CD4-positive, alpha-beta T cell (primary cell): ENCODE measurements at regions of chr5 and their contacts with region 1.

Region 1: DNA sequence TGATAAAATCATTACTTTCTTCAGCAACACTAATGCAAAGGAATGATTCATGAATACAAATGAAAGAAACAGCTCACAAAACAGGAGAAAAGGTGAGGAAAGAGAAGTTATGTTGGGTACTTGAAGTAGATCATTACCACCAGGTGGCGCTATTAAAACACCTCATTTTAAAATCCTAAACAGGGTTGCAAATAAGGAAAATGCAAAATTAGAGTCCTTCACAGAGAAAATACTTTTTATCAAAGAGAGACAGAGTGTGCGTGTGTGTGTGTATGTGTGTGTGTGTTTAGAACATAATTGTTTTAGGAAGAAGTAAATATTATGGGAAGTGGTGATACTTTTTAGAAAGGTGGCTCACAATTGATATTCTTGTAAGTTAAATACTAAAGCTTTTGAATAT is 49.5 kb upstream of the CD180 start:
- DNase-seq: peak in 5 of 14 experiments; percentile 7 to 83 (median 75)
- ATAC-seq: peak; percentile 39
- H3K4me3 ChIP-seq: no peak overlapping the region
- H3K4me3 Mint-ChIP-seq: no peak overlapping the region
- H3K27ac ChIP-seq: no peak overlapping the region
- H3K27ac Mint-ChIP-seq: no peak overlapping the region
- H3K4me1 ChIP-seq: peaks cover 12% of the 10 kb centered on the region
- H3K4me1 Mint-ChIP-seq: peaks cover 4% of the 10 kb centered on the region
- H3K27me3 ChIP-seq: no peaks in the 10 kb centered on the region
- H3K27me3 Mint-ChIP-seq: no peaks in the 10 kb centered on the region
- CTCF ChIP-seq: peak; percentile 91

Region 2: GRCh38 chr5:66223636-66224035 is 1022.5 kb before region 1 on chr5:
- CTCF ChIA-PET with region 1: no interaction called
- POLR2A ChIA-PET with region 1: no interaction called
- intact Hi-C with region 1: no loop called
- DNase-seq: no peak
- ATAC-seq: no peak
- H3K4me3 ChIP-seq: no peak overlapping the region
- H3K4me3 Mint-ChIP-seq: no peak overlapping the region
- H3K27ac ChIP-seq: no peak overlapping the region
- H3K27ac Mint-ChIP-seq: no peak overlapping the region
- H3K4me1 ChIP-seq: no peaks in the 10 kb centered on the region
- H3K4me1 Mint-ChIP-seq: no peaks in the 10 kb centered on the region
- H3K27me3 ChIP-seq: no peaks in the 10 kb centered on the region
- H3K27me3 Mint-ChIP-seq: no peaks in the 10 kb centered on the region
- CTCF ChIP-seq: no peak

Region 3: GRCh38 chr5:66306105-66306843 is 939.8 kb before region 1 on chr5:
- CTCF ChIA-PET with region 1: no interaction called
- POLR2A ChIA-PET with region 1: no interaction called
- intact Hi-C with region 1: loop called in 1 of 2 experiments (anchors 5 kb)
- DNase-seq: peak in 4 of 14 experiments; percentile 26 to 58 (median 48)
- ATAC-seq: peak; percentile 65
- H3K4me3 ChIP-seq: no peak overlapping the region
- H3K4me3 Mint-ChIP-seq: no peak overlapping the region
- H3K27ac ChIP-seq: no peak overlapping the region
- H3K27ac Mint-ChIP-seq: no peak overlapping the region
- H3K4me1 ChIP-seq: peaks cover 5% of the 10 kb centered on the region
- H3K4me1 Mint-ChIP-seq: peaks cover 10% of the 10 kb centered on the region
- H3K27me3 ChIP-seq: peaks cover 0 to 10% of the 10 kb centered on the region in 2 experiments
- H3K27me3 Mint-ChIP-seq: peaks cover 5% of the 10 kb centered on the region
- CTCF ChIP-seq: peak; percentile 77

Region 4: DNA sequence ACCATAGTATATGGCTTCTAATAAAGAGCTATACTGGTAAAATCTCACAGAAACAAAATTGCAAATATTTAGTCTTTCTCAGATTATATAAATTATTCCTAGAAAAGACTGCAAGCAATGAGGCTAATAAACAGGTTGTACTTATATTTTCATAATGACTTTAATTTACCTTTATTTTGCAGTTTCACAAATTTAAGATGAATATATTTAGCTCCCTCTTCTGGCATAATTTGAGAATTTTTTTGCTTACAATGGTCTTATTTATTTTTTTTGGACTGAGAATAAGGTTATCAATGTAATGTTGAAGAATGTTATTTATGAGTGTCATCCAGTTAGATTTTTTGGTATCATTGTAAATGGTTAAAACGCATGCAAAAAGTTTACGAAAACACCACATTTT is 1026.2 kb after region 1 on chr5:
- CTCF ChIA-PET with region 1: no interaction called
- POLR2A ChIA-PET with region 1: no interaction called
- intact Hi-C with region 1: loop called (anchors 1 to 5 kb)
- DNase-seq: peak in 3 of 14 experiments; percentile 52 to 56 (median 54)
- ATAC-seq: no peak
- H3K4me3 ChIP-seq: no peak overlapping the region
- H3K4me3 Mint-ChIP-seq: no peak overlapping the region
- H3K27ac ChIP-seq: no peak overlapping the region
- H3K27ac Mint-ChIP-seq: peak overlapping the region; percentile 69
- H3K4me1 ChIP-seq: peaks cover 45% of the 10 kb centered on the region
- H3K4me1 Mint-ChIP-seq: peaks cover 96% of the 10 kb centered on the region
- H3K27me3 ChIP-seq: no peaks in the 10 kb centered on the region
- H3K27me3 Mint-ChIP-seq: no peaks in the 10 kb centered on the region
- CTCF ChIP-seq: peak; percentile 72

Region 5: GRCh38 chr5:68460147-68460798 is 1214.2 kb after region 1 on chr5:
- CTCF ChIA-PET with region 1: no interaction called
- POLR2A ChIA-PET with region 1: no interaction called
- intact Hi-C with region 1: loop called (anchors 2 kb)
- DNase-seq: peak in 11 of 14 experiments; percentile 8 to 80 (median 26)
- ATAC-seq: peak; percentile 63
- H3K4me3 ChIP-seq: no peak overlapping the region
- H3K4me3 Mint-ChIP-seq: no peak overlapping the region
- H3K27ac ChIP-seq: no peak overlapping the region
- H3K27ac Mint-ChIP-seq: no peak overlapping the region
- H3K4me1 ChIP-seq: peaks cover 16% of the 10 kb centered on the region
- H3K4me1 Mint-ChIP-seq: peaks cover 21% of the 10 kb centered on the region
- H3K27me3 ChIP-seq: no peaks in the 10 kb centered on the region
- H3K27me3 Mint-ChIP-seq: no peaks in the 10 kb centered on the region
- CTCF ChIP-seq: peak; percentile 83

Region 6: DNA sequence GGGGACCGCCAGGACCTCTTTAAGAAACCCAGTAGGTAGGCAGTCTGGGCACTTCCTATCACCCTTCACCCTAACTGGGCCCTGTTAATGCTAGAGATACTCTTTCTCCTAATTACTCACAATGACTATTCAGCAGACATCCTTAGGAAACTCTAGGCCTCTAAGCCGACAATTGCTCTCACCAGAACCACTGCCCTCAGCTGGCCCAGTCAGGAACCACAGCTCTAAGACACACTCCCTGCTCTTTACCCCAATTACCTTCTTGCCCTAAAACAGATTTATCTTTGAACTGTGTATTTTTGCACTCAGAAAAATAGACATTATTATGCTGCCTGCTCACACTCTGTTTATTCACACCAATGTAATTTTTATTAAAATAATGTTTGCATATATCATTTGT is 1415.1 kb after region 1 on chr5:
- CTCF ChIA-PET with region 1: no interaction called
- POLR2A ChIA-PET with region 1: no interaction called
- intact Hi-C with region 1: loop called in 1 of 2 experiments (anchors 10 kb)
- DNase-seq: peak in 2 of 14 experiments; percentile 6 to 7
- ATAC-seq: no peak
- H3K4me3 ChIP-seq: no peak overlapping the region
- H3K4me3 Mint-ChIP-seq: no peak overlapping the region
- H3K27ac ChIP-seq: no peak overlapping the region
- H3K27ac Mint-ChIP-seq: no peak overlapping the region
- H3K4me1 ChIP-seq: no peaks in the 10 kb centered on the region
- H3K4me1 Mint-ChIP-seq: no peaks in the 10 kb centered on the region
- H3K27me3 ChIP-seq: no peaks in the 10 kb centered on the region
- H3K27me3 Mint-ChIP-seq: no peaks in the 10 kb centered on the region
- CTCF ChIP-seq: no peak

Region 7: GRCh38 chr5:68872088-68872839 is 1626.2 kb after region 1 on chr5:
- CTCF ChIA-PET with region 1: no interaction called
- POLR2A ChIA-PET with region 1: no interaction called
- intact Hi-C with region 1: loop called in 1 of 2 experiments (anchors 10 kb)
- DNase-seq: no peak
- ATAC-seq: no peak
- H3K4me3 ChIP-seq: no peak overlapping the region
- H3K4me3 Mint-ChIP-seq: no peak overlapping the region
- H3K27ac ChIP-seq: no peak overlapping the region
- H3K27ac Mint-ChIP-seq: no peak overlapping the region
- H3K4me1 ChIP-seq: peaks cover 8% of the 10 kb centered on the region
- H3K4me1 Mint-ChIP-seq: peaks cover 21% of the 10 kb centered on the region
- H3K27me3 ChIP-seq: no peaks in the 10 kb centered on the region
- H3K27me3 Mint-ChIP-seq: no peaks in the 10 kb centered on the region
- CTCF ChIP-seq: no peak

Region 8: GRCh38 chr5:69007726-69008368 is 1761.7 kb after region 1 on chr5:
- CTCF ChIA-PET with region 1: no interaction called
- POLR2A ChIA-PET with region 1: no interaction called
- intact Hi-C with region 1: loop called (anchors 2 kb)
- DNase-seq: peak; percentile 51 to 75 (median 62)
- ATAC-seq: peak; percentile 88
- H3K4me3 ChIP-seq: no peak overlapping the region
- H3K4me3 Mint-ChIP-seq: no peak overlapping the region
- H3K27ac ChIP-seq: no peak overlapping the region
- H3K27ac Mint-ChIP-seq: no peak overlapping the region
- H3K4me1 ChIP-seq: no peaks in the 10 kb centered on the region
- H3K4me1 Mint-ChIP-seq: no peaks in the 10 kb centered on the region
- H3K27me3 ChIP-seq: no peaks in the 10 kb centered on the region
- H3K27me3 Mint-ChIP-seq: peaks cover 23% of the 10 kb centered on the region
- CTCF ChIP-seq: peak; percentile 83